Sciatic nerve (tissue), 2 donors: ENCODE measurements at regions of chr17 and their contacts with region 1.

Region 1: DNA sequence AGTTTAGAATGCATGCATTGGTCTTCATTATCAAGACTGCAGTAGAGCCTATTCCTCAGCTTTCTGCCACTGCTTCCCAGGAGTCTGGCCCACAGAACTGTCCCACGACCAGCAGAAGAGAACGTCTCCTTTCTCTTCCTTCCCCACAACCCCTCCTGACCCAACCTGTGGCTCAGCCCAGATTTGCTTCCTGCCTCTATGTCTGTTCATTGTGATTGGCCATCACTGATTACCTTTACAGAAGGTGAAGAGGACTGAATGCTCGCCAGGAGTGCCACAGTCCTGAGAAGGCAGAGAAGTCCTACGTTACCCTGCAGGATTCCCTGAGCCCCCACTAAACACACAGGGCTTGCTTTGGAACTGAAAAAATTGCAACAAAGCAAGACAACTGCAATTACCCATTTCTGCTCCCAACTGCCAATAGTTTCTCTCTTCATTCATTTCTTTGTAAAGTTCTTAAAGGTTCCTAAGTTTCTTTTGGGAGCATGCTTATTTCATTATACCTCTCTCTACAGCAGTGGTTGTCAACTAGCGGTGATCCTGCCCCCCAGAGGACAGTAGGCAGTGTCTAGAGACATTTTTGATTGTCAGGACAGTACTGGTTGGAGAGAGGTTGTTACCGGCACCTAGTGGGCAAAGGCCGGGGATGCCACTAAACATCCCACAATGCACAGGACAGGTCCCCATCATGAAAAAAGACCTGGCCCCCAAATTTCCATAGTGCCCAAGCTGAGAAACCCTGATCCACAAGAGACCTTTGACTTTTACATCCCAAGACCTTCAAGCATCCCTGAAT is 4.5 kb upstream of the NAT9 start:
- DNase-seq: no peak
- ATAC-seq: no peak

Region 2: GRCh38 chr17:74631468-74632450 is 148.9 kb before region 1 on chr17:
- intact Hi-C with region 1: loop called (anchors 10 kb)
- DNase-seq: no peak
- ATAC-seq: peak; percentile 38

Region 3: DNA sequence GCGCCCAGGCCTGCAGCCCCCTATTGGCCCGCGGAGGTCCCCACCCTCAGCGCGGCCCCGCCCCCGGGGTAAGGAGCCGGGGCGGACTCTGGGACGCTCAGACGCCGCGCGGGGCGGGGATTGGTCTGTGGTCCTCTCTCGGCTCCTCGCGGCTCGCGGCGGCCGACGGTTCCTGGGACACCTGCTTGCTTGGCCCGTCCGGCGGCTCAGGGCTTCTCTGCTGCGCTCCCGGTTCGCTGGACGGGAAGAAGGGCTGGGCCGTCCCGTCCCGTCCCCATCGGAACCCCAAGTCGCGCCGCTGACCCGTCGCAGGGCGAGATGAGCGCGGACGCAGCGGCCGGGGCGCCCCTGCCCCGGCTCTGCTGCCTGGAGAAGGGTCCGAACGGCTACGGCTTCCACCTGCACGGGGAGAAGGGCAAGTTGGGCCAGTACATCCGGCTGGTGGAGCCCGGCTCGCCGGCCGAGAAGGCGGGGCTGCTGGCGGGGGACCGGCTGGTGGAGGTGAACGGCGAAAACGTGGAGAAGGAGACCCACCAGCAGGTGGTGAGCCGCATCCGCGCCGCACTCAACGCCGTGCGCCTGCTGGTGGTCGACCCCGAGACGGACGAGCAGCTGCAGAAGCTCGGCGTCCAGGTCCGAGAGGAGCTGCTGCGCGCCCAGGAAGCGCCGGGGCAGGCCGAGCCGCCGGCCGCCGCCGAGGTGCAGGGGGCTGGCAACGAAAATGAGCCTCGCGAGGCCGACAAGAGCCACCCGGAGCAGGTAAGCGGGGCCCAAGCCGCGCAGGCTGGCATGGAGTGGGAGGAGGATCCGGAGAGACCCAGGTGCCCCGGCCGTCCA is 31.9 kb before region 1 on chr17 and contains the start of gene NHERF1:
- intact Hi-C with region 1: loop called (anchors 5 kb)
- DNase-seq: peak; percentile 97
- ATAC-seq: peak; percentile 96
- total RNA-seq, gene NHERF1: 39.0 TPM

Region 4: DNA sequence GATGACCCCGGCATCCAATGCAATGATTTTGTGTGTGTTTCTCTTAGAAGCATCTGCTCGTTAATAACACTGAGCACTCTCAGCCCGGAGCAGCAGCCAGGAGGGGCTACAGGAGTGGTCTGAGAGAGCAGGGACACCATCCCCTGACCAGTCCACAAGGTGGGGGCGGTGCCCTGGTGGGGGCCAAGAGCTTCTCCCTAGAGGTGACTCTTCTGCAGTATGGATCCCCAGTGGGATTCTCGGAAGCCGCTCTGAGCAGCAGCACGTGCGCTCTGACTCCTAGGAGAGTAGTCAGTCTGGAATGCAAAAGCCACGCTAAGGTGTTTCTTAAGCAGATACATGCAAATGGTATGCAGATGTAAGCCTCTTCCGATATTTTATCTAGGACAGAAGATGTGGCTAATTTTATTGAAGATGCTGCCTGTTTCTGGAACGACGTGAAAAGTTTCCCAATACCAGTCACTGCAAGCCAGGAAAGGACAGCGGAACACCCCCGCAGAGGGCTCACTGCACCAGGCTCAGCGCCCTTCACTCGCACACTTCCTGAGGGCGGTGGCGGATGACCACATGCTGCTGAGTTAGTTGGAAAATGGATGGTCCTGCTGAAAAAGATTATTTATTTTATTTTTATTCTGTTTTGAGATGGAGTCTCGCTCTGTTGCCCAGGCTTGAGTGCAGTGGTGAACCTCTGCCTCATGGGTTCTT is 102.6 kb after region 1 on chr17:
- intact Hi-C with region 1: no loop called
- DNase-seq: no peak
- ATAC-seq: no peak